OCI-LY7 (cell line): ENCODE measurements at regions of chr9 and their contacts with region 1.

Region 1: GRCh38 chr9:97921959-97922724 is at the start of gene TRMO:
- DNase-seq: peak; percentile 100
- H3K4me3 ChIP-seq: peak within 1 kb of the TSS; percentile 72
- H3K27ac ChIP-seq: peak within 1 kb of the TSS; percentile 85
- H3K4me1 ChIP-seq: peaks cover 45% of the 10 kb centered on the region
- CTCF ChIP-seq: peak; percentile 83
- total RNA-seq, gene TRMO: 17.6 and 34.7 TPM in 2 replicates

Region 2: DNA sequence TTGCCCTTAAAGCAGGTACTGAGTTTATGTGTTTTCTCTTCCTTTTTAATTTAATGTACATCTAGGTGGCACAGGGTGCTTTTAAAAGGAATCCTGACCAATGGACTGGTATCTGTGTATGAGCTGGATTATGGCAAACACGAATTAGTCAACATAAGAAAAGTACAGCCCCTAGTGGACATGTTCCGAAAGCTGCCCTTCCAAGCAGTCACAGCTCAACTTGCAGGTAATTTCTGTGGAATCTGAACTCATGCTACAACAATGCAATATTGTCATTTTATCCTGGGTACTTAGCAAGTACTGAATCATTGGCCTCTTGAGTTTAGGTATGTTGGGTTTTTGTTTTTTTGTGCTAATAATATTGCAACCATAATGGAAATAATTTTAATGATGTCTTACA is 435.0 kb before region 1 on chr9:
- CTCF ChIA-PET with region 1: no interaction called
- POLR2A ChIA-PET with region 1: no interaction called
- intact Hi-C with region 1: no loop called
- DNase-seq: no peak
- H3K4me3 ChIP-seq: no peak overlapping the region
- H3K27ac ChIP-seq: no peak overlapping the region
- H3K4me1 ChIP-seq: no peaks in the 10 kb centered on the region
- CTCF ChIP-seq: peak; percentile 58

Region 3: DNA sequence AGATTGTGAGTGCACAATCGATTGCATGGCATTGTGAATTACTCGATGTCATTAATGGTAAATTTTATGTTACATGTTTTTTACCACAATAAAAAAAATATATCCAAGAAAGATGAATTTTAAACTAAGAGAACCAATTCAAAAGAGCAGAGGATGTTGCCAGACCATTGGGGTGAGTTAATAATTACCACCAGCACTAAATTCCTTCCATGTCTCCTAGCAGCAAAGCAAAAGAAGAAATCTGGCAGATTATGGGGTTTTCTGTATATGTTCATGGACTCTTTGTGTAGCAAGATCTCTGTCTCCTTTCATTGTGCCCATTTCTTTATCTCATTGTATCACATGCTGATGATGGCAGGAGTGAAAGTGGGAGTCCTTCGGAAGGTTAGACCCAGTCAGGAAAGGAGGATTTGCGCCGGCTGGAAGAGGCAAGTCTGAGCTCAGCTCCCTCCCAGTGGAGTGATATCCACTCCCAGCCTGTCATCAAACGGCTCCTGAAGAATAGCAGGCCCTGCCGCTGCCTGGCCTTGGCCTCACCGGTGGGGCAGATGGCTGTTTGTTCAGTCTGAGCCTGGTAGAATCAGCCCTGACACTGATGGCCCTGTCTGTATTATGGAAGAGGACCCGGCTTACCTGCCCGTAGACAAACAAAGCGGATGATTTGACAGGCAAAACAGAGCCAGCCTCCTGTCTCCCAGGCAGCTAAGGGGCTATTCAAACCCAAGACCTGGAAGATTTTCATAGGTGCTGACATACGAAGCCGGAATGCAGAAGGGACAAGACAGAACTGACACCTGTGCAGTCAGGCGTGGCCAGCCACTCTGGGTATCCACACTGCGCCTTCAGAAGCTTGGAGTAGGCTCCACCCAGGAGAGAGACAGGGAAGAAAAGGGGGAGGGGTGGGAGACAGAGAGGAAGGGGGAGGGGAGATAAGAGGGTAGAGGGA is 91.0 kb before region 1 on chr9:
- CTCF ChIA-PET with region 1: no interaction called
- POLR2A ChIA-PET with region 1: no interaction called
- intact Hi-C with region 1: no loop called
- DNase-seq: no peak
- H3K4me3 ChIP-seq: no peak overlapping the region
- H3K27ac ChIP-seq: no peak overlapping the region
- H3K4me1 ChIP-seq: peaks cover 8% of the 10 kb centered on the region
- CTCF ChIP-seq: no peak

Region 4: GRCh38 chr9:97875111-97875510 is 47.0 kb before region 1 on chr9:
- CTCF ChIA-PET with region 1: no interaction called
- POLR2A ChIA-PET with region 1: no interaction called
- intact Hi-C with region 1: no loop called
- DNase-seq: no peak
- H3K4me3 ChIP-seq: no peak overlapping the region
- H3K27ac ChIP-seq: no peak overlapping the region
- H3K4me1 ChIP-seq: no peaks in the 10 kb centered on the region
- CTCF ChIP-seq: no peak

Region 5: DNA sequence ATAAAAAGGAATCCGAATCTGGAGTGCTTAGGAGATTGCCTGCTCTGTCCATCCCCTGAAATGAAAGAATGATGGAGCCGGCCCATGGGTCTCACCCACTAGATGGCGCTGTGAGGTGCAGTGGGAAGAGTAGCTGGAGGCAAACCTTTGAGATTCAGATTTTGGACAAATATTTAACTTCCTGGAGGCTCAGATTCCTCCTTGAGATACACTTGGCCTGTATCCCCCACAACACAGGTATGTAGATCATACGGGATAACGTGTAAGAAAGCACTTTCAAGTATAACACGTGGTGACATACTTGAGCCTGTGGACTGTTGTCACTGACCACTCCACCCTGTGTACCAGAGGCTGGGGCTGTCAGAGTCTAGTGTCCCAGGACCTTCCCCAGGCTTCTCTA is 32.1 kb before region 1 on chr9:
- CTCF ChIA-PET with region 1: no interaction called
- POLR2A ChIA-PET with region 1: no interaction called
- intact Hi-C with region 1: no loop called
- DNase-seq: peak; percentile 45
- H3K4me3 ChIP-seq: no peak overlapping the region
- H3K27ac ChIP-seq: no peak overlapping the region
- H3K4me1 ChIP-seq: no peaks in the 10 kb centered on the region
- CTCF ChIP-seq: peak; percentile 98

Region 6: DNA sequence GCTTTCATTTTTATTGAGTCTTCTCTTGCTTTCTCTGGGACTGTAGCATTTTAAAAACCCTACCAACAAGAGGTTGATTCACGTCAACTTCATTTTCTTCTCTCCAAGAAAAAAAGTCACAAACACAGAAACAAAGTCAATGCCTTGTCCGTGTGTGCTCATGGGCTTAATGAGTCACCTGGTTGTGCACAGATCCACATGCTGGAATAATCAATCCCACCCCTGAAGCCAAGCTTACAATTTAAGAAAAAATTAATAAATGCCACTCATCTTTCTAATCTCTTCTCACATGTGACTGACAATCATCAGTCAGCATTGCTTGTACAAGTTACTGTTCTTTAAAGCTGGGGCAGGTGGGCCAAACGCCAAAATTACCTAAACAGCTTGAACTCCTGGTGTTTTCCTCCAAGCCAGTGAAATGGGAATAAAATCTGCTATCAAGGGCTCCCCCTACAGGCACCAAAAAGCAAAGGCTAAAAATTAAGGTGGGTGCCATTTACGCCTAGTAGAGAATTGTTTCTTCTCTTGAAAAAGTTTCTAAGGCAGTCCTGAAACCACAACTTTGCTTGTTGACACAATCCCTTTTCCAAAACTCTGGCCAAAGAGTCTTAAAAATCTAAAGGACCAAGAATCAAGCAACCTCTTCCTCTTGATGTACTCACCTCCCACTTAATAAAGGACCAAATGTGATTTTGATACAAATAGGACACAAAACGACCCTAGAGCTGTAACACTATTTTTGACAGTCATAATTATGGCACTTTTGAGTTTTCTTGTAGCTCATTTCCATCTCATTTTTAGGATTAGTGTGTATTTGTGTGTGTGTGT is 21.2 kb before region 1 on chr9:
- CTCF ChIA-PET with region 1: interaction called, 3 read pairs
- POLR2A ChIA-PET with region 1: interaction called, 10 read pairs
- intact Hi-C with region 1: no loop called
- DNase-seq: peak; percentile 48
- H3K4me3 ChIP-seq: no peak overlapping the region
- H3K27ac ChIP-seq: no peak overlapping the region
- H3K4me1 ChIP-seq: no peaks in the 10 kb centered on the region
- CTCF ChIP-seq: peak; percentile 98

Region 7: GRCh38 chr9:97954550-97954989 is 32.4 kb after region 1 on chr9:
- CTCF ChIA-PET with region 1: interaction called, 4 read pairs
- POLR2A ChIA-PET with region 1: interaction called, 8 read pairs
- intact Hi-C with region 1: loop called (anchors 1 kb)
- DNase-seq: peak; percentile 90
- H3K4me3 ChIP-seq: no peak overlapping the region
- H3K27ac ChIP-seq: peak overlapping the region; percentile 7
- H3K4me1 ChIP-seq: peaks cover 26% of the 10 kb centered on the region
- CTCF ChIP-seq: peak; percentile 93

Region 8: GRCh38 chr9:98034593-98035546 is 112.7 kb after region 1 on chr9:
- CTCF ChIA-PET with region 1: interaction called, 5 read pairs
- POLR2A ChIA-PET with region 1: interaction called, 6 read pairs
- intact Hi-C with region 1: loop called (anchors 1 kb)
- DNase-seq: peak; percentile 89
- H3K4me3 ChIP-seq: peak overlapping the region; percentile 34
- H3K27ac ChIP-seq: no peak overlapping the region
- H3K4me1 ChIP-seq: peaks cover 30% of the 10 kb centered on the region
- CTCF ChIP-seq: peak; percentile 91

Region 9: GRCh38 chr9:98101868-98102273 is 179.7 kb after region 1 on chr9:
- CTCF ChIA-PET with region 1: interaction called, 3 read pairs
- POLR2A ChIA-PET with region 1: interaction called, 3 read pairs
- intact Hi-C with region 1: loop called (anchors 2 kb)
- DNase-seq: peak; percentile 97
- H3K4me3 ChIP-seq: peak overlapping the region; percentile 59
- H3K27ac ChIP-seq: peak overlapping the region; percentile 95
- H3K4me1 ChIP-seq: peaks cover 98% of the 10 kb centered on the region
- CTCF ChIP-seq: no peak

Region 10: DNA sequence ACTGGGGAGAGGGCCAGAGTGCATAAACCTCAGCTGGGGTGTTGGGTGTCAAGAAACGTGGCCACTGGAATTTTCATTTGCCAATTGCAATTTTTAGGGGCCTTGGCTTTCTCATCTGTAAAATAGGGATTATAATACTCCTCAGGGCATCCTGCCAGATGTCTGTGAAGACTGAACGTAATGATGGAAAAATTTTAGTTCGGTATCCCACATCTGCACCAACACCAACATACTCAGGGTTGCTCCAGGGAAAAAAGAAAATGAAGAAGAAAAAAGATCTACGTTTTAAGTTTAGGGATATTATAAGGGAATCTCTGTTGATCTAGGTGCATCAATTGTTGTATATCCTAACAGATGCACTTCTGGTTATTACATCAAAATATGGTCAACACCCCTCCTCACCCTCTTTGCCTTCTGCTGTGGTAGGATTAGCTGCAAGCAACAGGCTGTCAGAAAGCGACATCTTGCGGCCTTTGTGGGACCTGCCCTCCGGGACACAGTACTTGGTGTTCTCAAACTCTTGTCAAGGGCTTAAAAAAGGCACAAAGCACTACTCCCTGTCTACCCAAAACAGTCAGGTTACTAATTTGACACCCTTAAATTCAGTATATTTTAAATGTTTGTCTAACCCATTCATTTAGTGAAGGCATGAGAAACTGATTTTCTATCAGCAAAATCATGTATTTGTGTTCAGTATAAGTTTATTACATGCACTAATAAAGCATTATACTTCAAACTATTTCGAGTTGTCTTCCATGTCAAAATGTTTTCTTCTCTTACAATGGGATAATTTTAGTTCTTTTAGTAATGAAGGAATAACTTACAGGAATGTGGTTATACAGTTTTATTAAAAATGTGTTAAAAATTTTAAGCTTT is 341.6 kb after region 1 on chr9:
- CTCF ChIA-PET with region 1: no interaction called
- POLR2A ChIA-PET with region 1: no interaction called
- intact Hi-C with region 1: loop called (anchors 1 kb)
- DNase-seq: peak; percentile 84
- H3K4me3 ChIP-seq: no peak overlapping the region
- H3K27ac ChIP-seq: no peak overlapping the region
- H3K4me1 ChIP-seq: no peaks in the 10 kb centered on the region
- CTCF ChIP-seq: peak; percentile 99